Naive thymus-derived CD4-positive, alpha-beta T cell (primary cell): ENCODE measurements at regions of chr1 and their contacts with region 1.

Region 1: GRCh38 chr1:22416555-22417454 is 34.8 kb upstream of the ZBTB40 start:
- DNase-seq: peak; percentile 42 to 76 (median 64)
- ATAC-seq: peak; percentile 86
- H3K4me3 ChIP-seq: no peak overlapping the region
- H3K4me3 Mint-ChIP-seq: no peak overlapping the region
- H3K27ac ChIP-seq: no peak overlapping the region
- H3K27ac Mint-ChIP-seq: peak overlapping the region in 1 of 9 donors; percentile 25
- H3K4me1 ChIP-seq: no peaks in the 10 kb centered on the region
- H3K4me1 Mint-ChIP-seq: peaks cover 0 to 7% (median 3%) of the 10 kb centered on the region in 7 donors
- H3K27me3 ChIP-seq: peaks cover 0 to 8% of the 10 kb centered on the region in 2 donors
- H3K27me3 Mint-ChIP-seq: peaks cover 30 to 39% (median 35%) of the 10 kb centered on the region in 5 donors

Region 2: DNA sequence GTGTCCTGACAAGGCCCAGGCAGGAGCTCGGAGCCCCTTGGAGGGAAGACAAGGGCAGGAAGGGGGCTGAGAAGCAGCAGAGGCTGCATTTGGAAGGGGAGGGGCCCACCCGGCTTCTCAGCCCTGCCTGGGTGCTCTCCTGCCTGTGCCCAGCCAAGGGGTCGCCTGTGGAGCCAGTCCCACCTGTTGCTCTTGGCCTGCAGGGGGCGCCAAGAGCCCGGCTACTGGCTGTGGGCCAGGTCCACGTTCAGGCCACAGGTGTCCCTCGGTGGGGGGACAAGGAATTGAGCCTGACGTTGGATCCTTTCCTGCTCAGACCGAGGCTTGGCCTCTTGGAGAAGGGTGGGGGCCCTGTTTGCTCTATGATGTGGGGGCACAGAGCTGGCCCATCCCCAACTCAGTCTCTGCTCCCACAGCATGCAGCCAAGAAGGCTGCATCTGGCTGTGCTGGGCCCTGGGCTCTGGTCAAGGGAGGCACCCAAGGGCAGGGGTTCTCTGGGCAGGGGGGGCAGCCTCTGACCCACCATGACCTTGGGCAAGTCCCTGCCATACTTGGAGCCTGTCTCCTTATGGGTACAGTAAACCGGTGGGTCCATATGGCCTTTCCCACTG is 284.8 kb before region 1 on chr1:
- CTCF ChIA-PET with region 1: no interaction called
- POLR2A ChIA-PET with region 1: no interaction called
- intact Hi-C with region 1: loop called in 1 of 2 experiments (anchors 2 kb)
- DNase-seq: peak; percentile 8 to 63 (median 37)
- ATAC-seq: peak; percentile 68
- H3K4me3 ChIP-seq: no peak overlapping the region
- H3K4me3 Mint-ChIP-seq: no peak overlapping the region
- H3K27ac ChIP-seq: no peak overlapping the region
- H3K27ac Mint-ChIP-seq: peak overlapping the region in 1 of 9 donors; percentile 25
- H3K4me1 ChIP-seq: no peaks in the 10 kb centered on the region
- H3K4me1 Mint-ChIP-seq: peaks cover 0 to 8% (median 0%) of the 10 kb centered on the region in 7 donors
- H3K27me3 ChIP-seq: no peaks in the 10 kb centered on the region
- H3K27me3 Mint-ChIP-seq: peaks cover 0 to 6% (median 0%) of the 10 kb centered on the region in 5 donors

Region 3: GRCh38 chr1:22641906-22642636 is 225.3 kb after region 1 on chr1:
- CTCF ChIA-PET with region 1: interaction called, 4 read pairs
- POLR2A ChIA-PET with region 1: no interaction called
- intact Hi-C with region 1: loop called in 1 of 2 experiments (anchors 1 kb)
- DNase-seq: peak; percentile 24 to 71 (median 61)
- ATAC-seq: peak; percentile 80
- H3K4me3 ChIP-seq: no peak overlapping the region
- H3K4me3 Mint-ChIP-seq: no peak overlapping the region
- H3K27ac ChIP-seq: no peak overlapping the region
- H3K27ac Mint-ChIP-seq: no peak overlapping the region
- H3K4me1 ChIP-seq: no peaks in the 10 kb centered on the region
- H3K4me1 Mint-ChIP-seq: peaks cover 0 to 4% (median 0%) of the 10 kb centered on the region in 7 donors
- H3K27me3 ChIP-seq: no peaks in the 10 kb centered on the region
- H3K27me3 Mint-ChIP-seq: peaks cover 0 to 27% (median 16%) of the 10 kb centered on the region in 5 donors